ENCODE measurements at regions of chr2 and their contacts with region 1.

Region 1: GRCh38 chr2:127701193-127701650 is at the start of gene SFT2D3:
- DNase-seq: peak; percentile 75
- ATAC-seq: peak; percentile 84
- H3K4me3 ChIP-seq: peak within 1 kb of the TSS; percentile 71
- H3K27ac ChIP-seq: peak within 1 kb of the TSS; percentile 99
- H3K4me1 ChIP-seq: peaks cover 9% of the 10 kb centered on the region
- H3K27me3 ChIP-seq: no peaks in the 10 kb centered on the region
- CTCF ChIP-seq: no peak
- EP300 ChIP-seq: no peak; a peak in 1 of 4 replicates
- POLR2A ChIP-seq: peak; percentile 97
- RAD21 ChIP-seq: no peak
- polyA plus RNA-seq, gene SFT2D3: not detected

Region 2: GRCh38 chr2:126518195-126518594 is 1183.0 kb before region 1 on chr2:
- CTCF ChIA-PET with region 1: no interaction called
- POLR2A ChIA-PET with region 1: no interaction called
- RAD21 ChIA-PET with region 1: no interaction called
- SMC1A ChIA-PET with region 1: no interaction called
- in situ Hi-C with region 1: no loop called
- intact Hi-C with region 1: no loop called
- DNase-seq: no peak
- ATAC-seq: no peak
- H3K4me3 ChIP-seq: no peak overlapping the region
- H3K27ac ChIP-seq: no peak overlapping the region
- H3K4me1 ChIP-seq: no peaks in the 10 kb centered on the region
- H3K27me3 ChIP-seq: no peaks in the 10 kb centered on the region
- CTCF ChIP-seq: no peak
- EP300 ChIP-seq: no peak
- POLR2A ChIP-seq: no peak
- RAD21 ChIP-seq: no peak

Region 3: DNA sequence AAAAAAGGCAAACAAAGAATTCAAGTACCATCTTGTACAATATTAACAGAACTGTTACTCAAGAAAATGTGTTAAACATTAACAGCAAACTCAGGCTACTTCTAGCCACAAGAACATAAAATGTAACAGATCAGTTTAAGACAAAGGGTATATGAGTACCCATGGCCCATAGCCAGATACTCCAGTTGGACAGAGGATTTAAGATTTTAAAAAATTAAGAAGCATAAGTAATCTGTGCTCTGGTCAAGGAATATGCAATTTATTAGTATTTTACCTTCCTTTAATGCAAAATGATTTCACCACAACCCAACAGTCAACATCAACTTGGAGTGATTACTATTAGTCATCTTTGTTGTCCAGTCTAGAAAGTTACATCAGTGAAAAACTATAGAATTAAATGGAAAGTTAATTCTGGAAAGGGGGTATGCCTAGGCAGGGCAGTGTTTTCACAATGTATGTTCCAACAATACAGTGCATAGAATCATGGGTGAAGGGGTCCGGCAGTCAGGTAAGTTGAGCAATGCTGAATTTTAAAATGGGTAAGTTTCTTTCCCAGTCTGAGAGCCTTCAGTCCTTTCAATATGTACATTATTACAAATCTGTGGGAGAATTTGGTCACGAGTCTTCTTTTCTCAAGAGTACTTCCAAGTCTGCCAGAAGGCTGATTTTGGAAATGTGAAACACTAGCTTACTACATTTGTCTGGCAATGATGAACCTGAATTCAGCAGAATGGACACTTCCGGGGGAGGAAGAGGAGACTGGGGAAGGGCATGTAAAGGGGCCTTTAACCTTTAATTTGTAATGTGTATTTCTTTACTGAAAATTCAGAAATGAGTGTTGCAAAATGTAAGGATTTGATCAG is 34.5 kb after region 1 on chr2:
- CTCF ChIA-PET with region 1: interaction called, 4 read pairs
- POLR2A ChIA-PET with region 1: interaction called, 8 read pairs
- RAD21 ChIA-PET with region 1: interaction called, 21 read pairs
- SMC1A ChIA-PET with region 1: interaction called, 9 read pairs
- in situ Hi-C with region 1: no loop called
- intact Hi-C with region 1: loop called (anchors 5 kb)
- DNase-seq: no peak
- ATAC-seq: peak; percentile 74
- H3K4me3 ChIP-seq: no peak overlapping the region
- H3K27ac ChIP-seq: no peak overlapping the region; the same call in 1 of the 2 replicates
- H3K4me1 ChIP-seq: 0 out of 2 replicates have a peak, but pooled peaks cover 3% of the 10 kb centered on the region
- H3K27me3 ChIP-seq: no peaks in the 10 kb centered on the region
- CTCF ChIP-seq: no peak
- EP300 ChIP-seq: no peak
- POLR2A ChIP-seq: no peak
- RAD21 ChIP-seq: no peak

Region 4: GRCh38 chr2:127796389-127796788 is 95.2 kb after region 1 on chr2:
- CTCF ChIA-PET with region 1: no interaction called
- POLR2A ChIA-PET with region 1: no interaction called
- RAD21 ChIA-PET with region 1: interaction called, 7 read pairs
- SMC1A ChIA-PET with region 1: interaction called, 4 read pairs
- in situ Hi-C with region 1: no loop called
- intact Hi-C with region 1: loop called (anchors 5 kb)
- DNase-seq: peak; percentile 17
- ATAC-seq: peak; percentile 66
- H3K4me3 ChIP-seq: no peak overlapping the region; the same call in 1 of the 2 replicates
- H3K27ac ChIP-seq: peak overlapping the region; percentile 37; the same call in 1 of the 2 replicates
- H3K4me1 ChIP-seq: peaks cover 29% of the 10 kb centered on the region
- H3K27me3 ChIP-seq: no peaks in the 10 kb centered on the region
- CTCF ChIP-seq: no peak
- EP300 ChIP-seq: peak in 1 of 2 experiments; percentile 36; a peak in 1 of 4 replicates
- POLR2A ChIP-seq: no peak
- RAD21 ChIP-seq: no peak

Region 5: DNA sequence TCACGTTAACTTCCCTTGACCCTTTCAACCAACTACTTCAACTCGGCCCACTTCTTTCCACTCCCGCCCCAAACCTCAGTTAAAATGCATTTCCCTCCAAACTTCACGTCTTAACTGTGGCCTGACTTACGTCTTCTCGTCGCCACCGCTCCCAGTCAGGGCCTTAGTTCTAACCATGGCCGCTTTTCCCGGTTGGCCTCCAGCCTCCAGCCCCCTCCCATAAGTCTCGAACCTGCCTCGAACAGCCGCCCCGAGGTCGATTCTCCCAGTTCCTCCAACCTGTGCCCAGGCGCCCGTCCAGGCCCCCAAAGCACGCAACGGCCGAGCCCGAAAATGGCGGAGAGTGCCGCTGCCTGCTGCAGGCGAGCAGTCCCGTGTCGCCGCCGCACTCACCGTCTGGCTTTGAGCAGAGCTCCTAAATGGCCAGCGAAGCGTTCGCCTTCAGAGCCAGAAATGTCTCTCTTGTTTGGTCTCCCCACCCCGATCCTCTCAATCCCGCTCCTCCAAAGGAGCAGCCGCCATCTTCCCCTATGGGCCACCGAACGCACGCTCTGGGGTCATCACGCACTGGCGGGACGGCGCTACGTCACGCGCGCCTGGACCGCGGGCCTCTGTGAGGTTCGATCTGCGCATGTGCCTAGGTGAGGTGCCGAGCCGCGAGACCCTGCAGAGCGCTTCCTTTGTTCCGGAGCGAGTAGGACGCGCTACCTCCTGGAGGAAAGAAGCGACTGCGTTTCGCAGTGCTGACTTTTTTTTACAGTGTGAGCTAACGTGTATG is 109.6 kb after region 1 on chr2 and contains the start of gene WDR33:
- CTCF ChIA-PET with region 1: interaction called, 7 read pairs
- POLR2A ChIA-PET with region 1: interaction called, 9 read pairs
- RAD21 ChIA-PET with region 1: interaction called, 20 read pairs
- SMC1A ChIA-PET with region 1: interaction called, 12 read pairs
- in situ Hi-C with region 1: no loop called
- intact Hi-C with region 1: loop called (anchors 1 kb)
- DNase-seq: peak; percentile 87
- ATAC-seq: peak; percentile 97
- H3K4me3 ChIP-seq: peak within 1 kb of the TSS; percentile 84
- H3K27ac ChIP-seq: peak within 1 kb of the TSS; percentile 96
- H3K4me1 ChIP-seq: peaks cover 6% of the 10 kb centered on the region
- H3K27me3 ChIP-seq: no peaks in the 10 kb centered on the region
- CTCF ChIP-seq: peak; percentile 21 to 51 (median 44); a peak in 4 of 6 replicates
- EP300 ChIP-seq: peak in 1 of 2 experiments; percentile 4; a peak in 1 of 4 replicates
- POLR2A ChIP-seq: peak; percentile 92
- RAD21 ChIP-seq: peak; percentile 64
- polyA plus RNA-seq, gene WDR33: 31.9 to 53.0 TPM

Region 6: GRCh38 chr2:127857265-127857808 is 156.1 kb after region 1 on chr2:
- CTCF ChIA-PET with region 1: no interaction called
- POLR2A ChIA-PET with region 1: no interaction called
- RAD21 ChIA-PET with region 1: no interaction called
- SMC1A ChIA-PET with region 1: interaction called, 3 read pairs
- in situ Hi-C with region 1: no loop called
- intact Hi-C with region 1: loop called (anchors 5 kb)
- DNase-seq: no peak
- ATAC-seq: peak; percentile 43
- H3K4me3 ChIP-seq: peak overlapping the region; percentile 93
- H3K27ac ChIP-seq: peak overlapping the region; percentile 65
- H3K4me1 ChIP-seq: 0 out of 2 replicates have a peak, but pooled peaks cover 2% of the 10 kb centered on the region
- H3K27me3 ChIP-seq: no peaks in the 10 kb centered on the region
- CTCF ChIP-seq: no peak
- EP300 ChIP-seq: no peak
- POLR2A ChIP-seq: no peak
- RAD21 ChIP-seq: no peak

Region 7: DNA sequence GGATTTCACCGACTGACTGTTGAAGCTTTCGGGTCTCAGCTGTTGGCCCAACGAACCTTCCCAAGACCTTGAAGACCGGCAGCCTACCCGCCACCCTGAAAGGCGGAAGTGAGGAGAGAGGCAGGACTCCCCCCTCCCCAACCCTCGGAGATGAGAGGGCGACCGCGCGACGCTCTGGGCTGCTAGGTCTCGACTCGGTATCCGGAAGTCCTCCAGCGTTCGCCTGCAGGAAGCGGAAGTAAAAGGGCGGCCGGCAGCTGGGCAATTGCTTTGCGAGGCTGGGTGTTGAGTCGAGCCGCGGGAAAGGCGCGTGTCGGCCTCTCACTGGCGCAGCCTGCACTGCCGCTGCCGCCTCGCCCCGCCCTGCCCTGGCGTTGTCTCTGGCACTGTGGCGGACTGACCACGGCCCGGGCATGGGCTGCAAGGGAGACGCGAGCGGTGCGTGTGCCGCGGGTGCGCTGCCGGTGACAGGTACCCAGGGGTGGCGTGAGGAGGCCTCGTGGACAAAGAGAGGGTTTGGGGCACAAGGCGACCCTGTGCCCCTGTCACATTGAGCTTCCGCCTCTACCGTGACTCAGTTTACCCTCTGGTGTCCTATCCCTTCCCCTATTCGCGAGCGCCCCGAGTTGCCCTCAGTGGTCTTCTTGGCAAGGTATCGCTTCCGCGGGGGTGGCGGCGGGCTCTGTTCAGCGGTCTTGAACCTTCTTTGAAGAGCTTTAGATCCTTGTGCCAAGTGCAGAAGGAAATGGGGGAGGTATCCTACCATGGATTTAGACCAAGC is 389.9 kb after region 1 on chr2 and contains the start of gene UGGT1:
- CTCF ChIA-PET with region 1: no interaction called
- POLR2A ChIA-PET with region 1: interaction called, 3 read pairs
- RAD21 ChIA-PET with region 1: no interaction called
- SMC1A ChIA-PET with region 1: no interaction called
- in situ Hi-C with region 1: no loop called
- intact Hi-C with region 1: loop called (anchors 1 kb)
- DNase-seq: peak; percentile 93
- ATAC-seq: peak; percentile 97
- H3K4me3 ChIP-seq: peak within 1 kb of the TSS; percentile 89
- H3K27ac ChIP-seq: peak within 1 kb of the TSS; percentile 89
- H3K4me1 ChIP-seq: peaks cover 11% of the 10 kb centered on the region
- H3K27me3 ChIP-seq: no peaks in the 10 kb centered on the region
- CTCF ChIP-seq: no peak
- EP300 ChIP-seq: no peak
- POLR2A ChIP-seq: peak; percentile 99
- RAD21 ChIP-seq: no peak
- polyA plus RNA-seq, gene UGGT1: 4.1 to 5.9 TPM

Measured in GM12878 (cell line).